ENCODE measurements at regions of chr1 and their contacts with region 1.

Region 1: GRCh38 chr1:61043010-61043820 is 39.1 kb upstream of the NFIA start:
- DNase-seq: peak; percentile 89
- H3K4me3 Mint-ChIP-seq: peak overlapping the region; percentile 62
- H3K27ac Mint-ChIP-seq: no peak overlapping the region
- H3K4me1 Mint-ChIP-seq: peaks cover 5% of the 10 kb centered on the region
- H3K27me3 Mint-ChIP-seq: peaks cover 26% of the 10 kb centered on the region

Region 2: GRCh38 chr1:59971464-59971911 is 1071.7 kb before region 1 on chr1:
- CTCF ChIA-PET with region 1: interaction called, 6 read pairs
- intact Hi-C with region 1: loop called (anchors 1 kb)
- DNase-seq: peak; percentile 60
- H3K4me3 Mint-ChIP-seq: no peak overlapping the region
- H3K27ac Mint-ChIP-seq: no peak overlapping the region
- H3K4me1 Mint-ChIP-seq: peaks cover 3% of the 10 kb centered on the region
- H3K27me3 Mint-ChIP-seq: peaks cover 22% of the 10 kb centered on the region

Region 3: DNA sequence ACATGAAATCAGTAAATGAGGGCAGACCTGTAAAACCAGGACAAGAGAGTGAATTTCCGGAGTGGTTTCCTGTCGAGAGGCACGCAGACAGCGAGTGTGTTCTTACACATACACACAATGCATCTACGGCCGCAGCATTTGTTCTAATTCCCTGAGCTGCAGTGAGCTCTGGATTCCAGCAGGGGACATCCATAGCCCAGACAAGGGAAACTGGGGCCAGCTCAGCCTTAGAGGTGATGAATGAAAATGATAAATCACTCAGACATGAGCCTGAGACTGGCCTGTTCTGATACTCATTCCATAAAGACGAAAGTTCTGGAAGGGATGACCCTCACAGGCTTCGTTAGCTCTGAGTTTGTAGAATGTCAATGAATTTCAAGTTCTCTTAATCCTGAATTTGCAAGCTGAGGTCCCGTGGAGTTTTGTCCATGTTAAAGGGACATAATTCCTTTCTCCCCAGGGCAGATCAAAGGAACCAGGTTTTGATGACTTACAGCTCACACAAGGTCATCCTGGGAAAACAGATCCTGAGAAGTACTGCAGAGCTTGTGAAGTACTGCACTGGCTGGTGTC is 761.8 kb before region 1 on chr1:
- CTCF ChIA-PET with region 1: interaction called, 3 read pairs
- intact Hi-C with region 1: loop called (anchors 1 kb)
- DNase-seq: peak; percentile 39
- H3K4me3 Mint-ChIP-seq: no peak overlapping the region
- H3K27ac Mint-ChIP-seq: no peak overlapping the region
- H3K4me1 Mint-ChIP-seq: peaks cover 5% of the 10 kb centered on the region
- H3K27me3 Mint-ChIP-seq: peaks cover 2% of the 10 kb centered on the region

Region 4: DNA sequence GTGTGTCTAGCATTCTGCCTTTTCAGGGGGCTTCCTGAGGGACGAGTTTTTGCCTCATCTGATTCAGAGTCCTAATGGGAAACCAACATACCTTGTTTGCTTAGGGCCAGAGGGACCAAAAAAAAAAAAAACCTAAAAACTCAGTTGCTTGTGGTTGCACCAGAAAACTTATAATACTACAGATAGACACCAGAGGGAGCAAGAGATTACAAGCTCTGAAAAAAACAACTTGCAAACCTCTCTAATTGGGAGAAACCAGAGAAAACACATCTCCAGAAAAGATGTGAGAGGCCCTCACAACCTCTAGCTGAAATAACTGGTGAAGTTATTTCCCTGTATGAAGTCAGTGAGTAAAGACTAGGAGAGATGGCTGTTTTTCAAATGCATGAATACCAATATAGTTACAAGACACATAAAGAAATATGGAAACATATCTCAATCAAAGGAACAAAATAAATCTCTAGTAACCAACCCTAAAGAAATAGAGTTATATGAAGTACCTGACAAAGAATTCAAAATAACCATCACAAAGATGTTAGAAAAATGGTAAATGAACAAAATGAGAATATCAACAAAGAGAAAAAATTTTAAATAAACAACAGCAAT is 194.5 kb before region 1 on chr1:
- CTCF ChIA-PET with region 1: interaction called, 14 read pairs
- intact Hi-C with region 1: loop called (anchors 1 kb)
- DNase-seq: no peak
- H3K4me3 Mint-ChIP-seq: no peak overlapping the region
- H3K27ac Mint-ChIP-seq: no peak overlapping the region
- H3K4me1 Mint-ChIP-seq: no peaks in the 10 kb centered on the region
- H3K27me3 Mint-ChIP-seq: peaks cover 10% of the 10 kb centered on the region

Region 5: GRCh38 chr1:60978421-60979357 is 64.5 kb before region 1 on chr1:
- CTCF ChIA-PET with region 1: interaction called, 11 read pairs
- intact Hi-C with region 1: loop called (anchors 1 kb)
- DNase-seq: peak; percentile 57
- H3K4me3 Mint-ChIP-seq: no peak overlapping the region
- H3K27ac Mint-ChIP-seq: no peak overlapping the region
- H3K4me1 Mint-ChIP-seq: peaks cover 2% of the 10 kb centered on the region
- H3K27me3 Mint-ChIP-seq: no peaks in the 10 kb centered on the region

Region 6: DNA sequence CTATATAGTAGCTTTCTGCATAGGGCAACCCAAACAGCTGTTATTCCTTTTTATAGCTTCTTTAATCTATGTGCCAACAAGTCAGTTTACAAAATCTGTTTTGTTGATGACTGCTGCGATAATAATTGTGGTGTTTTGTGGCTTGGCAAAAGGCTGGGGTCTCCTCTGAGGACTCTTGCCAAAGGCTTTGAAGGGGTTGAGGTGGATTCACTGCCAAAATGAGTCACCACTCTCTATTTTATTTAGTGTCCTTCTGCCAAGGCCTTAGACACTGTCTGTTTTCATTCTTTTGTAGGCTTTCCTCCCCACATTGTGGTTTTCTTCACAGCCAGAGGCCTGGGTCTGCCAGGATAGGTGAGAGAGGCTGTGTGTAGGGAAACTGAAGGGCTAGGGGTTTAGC is 200.9 kb after region 1 on chr1:
- CTCF ChIA-PET with region 1: no interaction called
- intact Hi-C with region 1: no loop called
- DNase-seq: no peak
- H3K4me3 Mint-ChIP-seq: no peak overlapping the region
- H3K27ac Mint-ChIP-seq: no peak overlapping the region
- H3K4me1 Mint-ChIP-seq: no peaks in the 10 kb centered on the region
- H3K27me3 Mint-ChIP-seq: no peaks in the 10 kb centered on the region

Region 7: DNA sequence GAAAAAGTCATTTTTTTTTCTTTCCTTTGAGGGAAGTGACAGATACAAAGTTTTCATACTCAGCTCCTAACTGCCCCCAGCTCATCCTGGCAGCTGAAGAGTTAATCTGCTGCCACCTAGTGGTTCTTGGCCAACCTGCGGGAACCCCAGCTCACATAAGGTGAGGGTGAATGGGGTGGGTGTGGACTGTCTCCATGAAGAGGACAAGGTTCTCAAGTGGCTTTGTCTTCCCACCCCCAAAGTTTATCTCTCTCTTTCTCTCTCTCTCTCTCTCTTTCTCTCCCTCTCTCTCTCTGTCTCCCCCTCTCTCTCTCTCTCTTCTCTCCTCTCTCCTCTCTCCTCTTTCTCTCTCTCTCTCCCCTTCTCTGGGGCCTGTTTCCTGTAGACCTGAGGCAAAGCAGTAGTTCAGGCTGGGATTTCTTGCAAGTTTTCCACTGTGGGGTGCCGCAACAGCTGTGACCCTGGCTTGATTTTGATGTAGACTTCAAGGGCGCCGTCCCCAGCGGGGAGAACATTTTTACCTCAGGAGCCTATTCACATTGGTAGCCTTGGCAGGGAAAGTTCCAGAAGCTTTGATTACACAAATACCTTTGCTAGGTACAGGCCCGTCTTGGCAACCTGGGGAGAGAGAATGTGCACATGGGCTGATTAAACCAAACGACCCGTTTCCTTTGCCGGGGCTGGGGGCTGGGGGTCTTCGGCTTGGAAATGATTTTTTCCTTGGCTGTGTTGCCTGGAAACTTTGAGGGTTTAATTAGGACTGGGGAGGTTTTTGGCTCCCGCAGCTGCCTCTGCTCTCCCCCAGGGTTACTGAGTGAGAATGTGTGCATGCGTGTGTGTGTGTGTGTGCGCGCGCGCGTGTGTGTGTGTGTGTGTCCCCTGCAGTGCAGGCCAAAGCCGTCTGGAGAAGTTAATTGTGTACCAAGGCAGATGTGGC is 545.8 kb after region 1 on chr1:
- CTCF ChIA-PET with region 1: interaction called, 25 read pairs
- intact Hi-C with region 1: loop called (anchors 2 kb)
- DNase-seq: peak; percentile 79
- H3K4me3 Mint-ChIP-seq: no peak overlapping the region
- H3K27ac Mint-ChIP-seq: no peak overlapping the region
- H3K4me1 Mint-ChIP-seq: no peaks in the 10 kb centered on the region
- H3K27me3 Mint-ChIP-seq: peaks cover 4% of the 10 kb centered on the region

Measured in activated naive CD4-positive, alpha-beta T cell treated with anti-CD3 and anti-CD28 coated beads for 36 hours (primary cell).